Dendritic cell treated with granulocyte-macrophage colony-stimulating factor and Interleukin-4, amounts not matched to agents 40 ng/mL and 50 ng/mL, for 4 days (primary cell): ENCODE measurements at regions of chr19 and their contacts with region 1.

Region 1: GRCh38 chr19:52987221-52987620 is 24.5 kb upstream of the ZNF816 start:
- H3K4me3 Mint-ChIP-seq: no peak overlapping the region
- H3K27ac Mint-ChIP-seq: no peak overlapping the region
- H3K4me1 Mint-ChIP-seq: peaks cover 6% of the 10 kb centered on the region
- H3K27me3 Mint-ChIP-seq: peaks cover 6% of the 10 kb centered on the region

Region 2: GRCh38 chr19:53034948-53035680 is 47.9 kb after region 1 on chr19:
- intact Hi-C with region 1: loop called (anchors 2 kb)
- H3K4me3 Mint-ChIP-seq: no peak overlapping the region
- H3K27ac Mint-ChIP-seq: no peak overlapping the region
- H3K4me1 Mint-ChIP-seq: no peaks in the 10 kb centered on the region
- H3K27me3 Mint-ChIP-seq: peaks cover 13% of the 10 kb centered on the region